ENCODE measurements at regions of chr5 and their contacts with region 1.

Region 1: DNA sequence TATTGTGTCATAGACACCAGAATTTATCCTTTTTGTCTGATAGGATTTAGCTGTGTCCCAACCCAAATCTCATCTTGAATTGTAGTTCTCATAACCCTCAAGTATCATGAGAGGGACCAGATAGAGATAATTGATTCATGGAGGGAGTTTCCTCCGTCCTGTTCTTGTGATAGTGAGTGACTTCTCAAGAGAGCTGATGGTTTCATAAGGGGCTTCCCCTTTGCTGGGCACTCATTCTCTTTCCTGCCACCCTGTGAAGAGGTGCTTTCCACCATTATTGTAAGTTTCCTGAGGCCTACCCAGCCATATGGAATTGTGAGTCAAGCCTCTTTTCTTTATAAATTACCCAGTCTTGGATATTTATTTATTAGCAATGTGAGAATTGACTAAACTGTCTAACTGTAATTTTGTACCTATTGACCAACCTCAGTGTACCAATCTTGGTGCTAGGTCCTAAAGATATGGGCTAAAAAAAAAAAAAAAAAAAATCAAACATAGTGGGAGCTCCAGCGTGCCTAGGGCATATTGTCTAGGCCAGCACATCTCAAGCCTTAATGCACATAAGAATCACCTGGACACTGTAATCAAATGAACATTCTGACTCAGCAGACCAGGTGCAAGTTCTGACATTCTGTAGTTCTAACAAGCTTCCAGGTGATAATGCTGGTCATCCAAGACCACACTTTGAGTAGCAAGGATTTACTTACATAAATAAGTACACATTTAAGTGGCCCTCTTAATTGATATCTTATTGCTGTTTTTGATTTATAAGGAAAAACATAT is 30.5 kb downstream of the ST8SIA4 start:
- DNase-seq: peak; percentile 62
- ATAC-seq: peak; percentile 80
- H3K4me3 ChIP-seq: no peak overlapping the region
- H3K4me3 Mint-ChIP-seq: no peak overlapping the region
- H3K27ac ChIP-seq: peak overlapping the region in 1 of 2 donors; percentile 61
- H3K27ac Mint-ChIP-seq: peak overlapping the region; percentile 37
- H3K4me1 ChIP-seq: peaks cover 9 to 15% of the 10 kb centered on the region in 2 donors
- H3K4me1 Mint-ChIP-seq: peaks cover 40% of the 10 kb centered on the region
- H3K27me3 ChIP-seq: no peaks in the 10 kb centered on the region
- H3K27me3 Mint-ChIP-seq: no peaks in the 10 kb centered on the region
- CTCF ChIP-seq: no peak

Region 2: DNA sequence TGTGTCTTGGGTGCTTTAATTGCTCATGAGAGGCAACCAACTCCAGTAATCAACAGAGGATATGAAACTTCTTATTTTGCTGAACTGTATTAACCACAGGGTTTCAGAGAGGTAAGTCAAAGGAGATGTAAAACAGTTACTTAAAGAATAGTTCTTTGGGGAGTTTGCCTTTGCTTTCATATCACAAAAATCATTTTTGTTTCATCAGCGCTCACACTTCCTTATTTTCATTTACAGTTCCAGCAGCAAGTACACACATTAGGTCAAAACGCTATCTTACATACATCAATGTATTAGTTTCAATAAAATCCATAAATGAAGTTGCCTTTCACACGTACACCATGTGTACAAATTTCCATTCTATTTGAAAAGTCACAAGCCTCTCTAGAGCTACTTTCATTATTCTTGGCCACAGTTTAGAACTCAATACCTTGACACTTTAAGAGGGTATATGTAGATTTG is 19.6 kb before region 1 on chr5:
- CTCF ChIA-PET with region 1: no interaction called
- POLR2A ChIA-PET with region 1: no interaction called
- intact Hi-C with region 1: loop called (anchors 2 kb)
- DNase-seq: peak; percentile 82
- ATAC-seq: peak; percentile 95
- H3K4me3 ChIP-seq: peak overlapping the region in 3 of 5 experiments; percentile 3 to 49 (median 16)
- H3K4me3 Mint-ChIP-seq: peak overlapping the region; percentile 68
- H3K27ac ChIP-seq: peak overlapping the region; percentile 51 to 84
- H3K27ac Mint-ChIP-seq: peak overlapping the region; percentile 76
- H3K4me1 ChIP-seq: peaks cover 37 to 51% of the 10 kb centered on the region in 2 donors
- H3K4me1 Mint-ChIP-seq: peaks cover 41% of the 10 kb centered on the region
- H3K27me3 ChIP-seq: no peaks in the 10 kb centered on the region
- H3K27me3 Mint-ChIP-seq: no peaks in the 10 kb centered on the region
- CTCF ChIP-seq: no peak

Region 3: GRCh38 chr5:100890461-100891008 is 17.9 kb after region 1 on chr5:
- CTCF ChIA-PET with region 1: no interaction called
- POLR2A ChIA-PET with region 1: interaction called, 3 read pairs
- intact Hi-C with region 1: loop called (anchors 2 kb)
- DNase-seq: peak; percentile 28
- ATAC-seq: no peak
- H3K4me3 ChIP-seq: peak overlapping the region in 1 of 5 experiments; percentile 57
- H3K4me3 Mint-ChIP-seq: peak overlapping the region; percentile 84
- H3K27ac ChIP-seq: peak overlapping the region; percentile 65 to 94
- H3K27ac Mint-ChIP-seq: peak overlapping the region; percentile 90
- H3K4me1 ChIP-seq: peaks cover 12 to 45% of the 10 kb centered on the region in 2 donors
- H3K4me1 Mint-ChIP-seq: peaks cover 59% of the 10 kb centered on the region
- H3K27me3 ChIP-seq: no peaks in the 10 kb centered on the region
- H3K27me3 Mint-ChIP-seq: no peaks in the 10 kb centered on the region
- CTCF ChIP-seq: no peak